Activated CD4-positive, alpha-beta T cell treated with anti-CD3 and anti-CD28 coated beads, Interleukin-2, amount 10 ng/mL, durations not matched to agents 7 days and 5 days (primary cell): ENCODE measurements at regions of chr13 and their contacts with region 1.

Region 1: GRCh38 chr13:98445340-98446233 is 131.3 kb downstream of the STK24 start:
- DNase-seq: peak; percentile 76
- H3K4me3 Mint-ChIP-seq: no peak overlapping the region
- H3K27ac Mint-ChIP-seq: peak overlapping the region; percentile 85
- H3K4me1 Mint-ChIP-seq: peaks cover 18% of the 10 kb centered on the region
- H3K27me3 Mint-ChIP-seq: no peaks in the 10 kb centered on the region

Region 2: GRCh38 chr13:98199480-98199879 is 246.1 kb before region 1 on chr13:
- CTCF ChIA-PET with region 1: no interaction called
- POLR2A ChIA-PET with region 1: no interaction called
- DNase-seq: no peak
- H3K4me3 Mint-ChIP-seq: no peak overlapping the region
- H3K27ac Mint-ChIP-seq: no peak overlapping the region
- H3K4me1 Mint-ChIP-seq: no peaks in the 10 kb centered on the region
- H3K27me3 Mint-ChIP-seq: peaks cover 5% of the 10 kb centered on the region

Region 3: GRCh38 chr13:98653463-98653985 is 207.9 kb after region 1 on chr13:
- CTCF ChIA-PET with region 1: interaction called, 30 read pairs
- POLR2A ChIA-PET with region 1: interaction called, 3 read pairs
- DNase-seq: peak; percentile 72
- H3K4me3 Mint-ChIP-seq: no peak overlapping the region
- H3K27ac Mint-ChIP-seq: no peak overlapping the region
- H3K4me1 Mint-ChIP-seq: peaks cover 2% of the 10 kb centered on the region
- H3K27me3 Mint-ChIP-seq: peaks cover 4% of the 10 kb centered on the region